ENCODE measurements at regions of chr14 and their contacts with region 1.

Region 1: DNA sequence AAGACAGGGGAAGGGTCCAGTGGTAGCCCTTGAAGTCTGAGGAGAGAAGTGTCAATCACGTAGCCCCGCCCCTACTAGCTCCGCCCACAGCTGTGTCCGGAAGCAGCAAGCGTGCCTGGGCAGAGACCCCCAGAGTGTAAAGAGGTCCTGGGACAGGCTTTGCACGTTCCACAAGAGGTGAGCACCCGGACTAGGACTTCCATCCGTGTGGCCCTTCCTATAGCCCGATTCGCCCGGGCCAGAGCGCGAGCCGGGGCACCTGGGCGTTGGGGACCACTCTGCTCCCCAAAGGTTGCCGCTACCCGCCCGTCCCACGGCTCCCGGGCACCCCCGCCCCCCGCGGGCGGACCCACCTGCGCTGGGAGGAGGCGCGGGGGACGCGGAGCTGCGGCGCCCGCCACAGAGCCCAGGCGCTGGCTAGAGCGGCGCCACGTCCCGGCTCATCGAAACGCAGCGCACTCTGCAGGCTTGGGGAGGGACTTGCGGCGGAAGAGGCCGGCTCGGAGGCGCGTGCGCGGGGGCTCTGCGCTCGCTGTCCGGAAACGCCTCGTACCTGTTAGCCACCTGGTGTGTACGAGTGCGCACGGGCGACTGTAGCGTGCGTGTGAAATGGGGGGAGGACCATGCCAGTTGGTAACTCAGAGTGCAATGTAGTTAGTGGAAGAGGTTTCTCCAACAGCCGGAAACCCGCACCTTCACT is at the start of gene RABGGTA:
- DNase-seq: peak; percentile 88
- ATAC-seq: peak; percentile 83
- H3K4me3 Mint-ChIP-seq: peak within 1 kb of the TSS; percentile 90
- H3K27ac Mint-ChIP-seq: peak within 1 kb of the TSS; percentile 96
- H3K4me1 Mint-ChIP-seq: peaks cover 57% of the 10 kb centered on the region
- H3K27me3 Mint-ChIP-seq: no peaks in the 10 kb centered on the region
- CTCF ChIP-seq: no peak
- total RNA-seq, gene RABGGTA: 53.6 and 70.5 TPM in 2 replicates

Region 2: DNA sequence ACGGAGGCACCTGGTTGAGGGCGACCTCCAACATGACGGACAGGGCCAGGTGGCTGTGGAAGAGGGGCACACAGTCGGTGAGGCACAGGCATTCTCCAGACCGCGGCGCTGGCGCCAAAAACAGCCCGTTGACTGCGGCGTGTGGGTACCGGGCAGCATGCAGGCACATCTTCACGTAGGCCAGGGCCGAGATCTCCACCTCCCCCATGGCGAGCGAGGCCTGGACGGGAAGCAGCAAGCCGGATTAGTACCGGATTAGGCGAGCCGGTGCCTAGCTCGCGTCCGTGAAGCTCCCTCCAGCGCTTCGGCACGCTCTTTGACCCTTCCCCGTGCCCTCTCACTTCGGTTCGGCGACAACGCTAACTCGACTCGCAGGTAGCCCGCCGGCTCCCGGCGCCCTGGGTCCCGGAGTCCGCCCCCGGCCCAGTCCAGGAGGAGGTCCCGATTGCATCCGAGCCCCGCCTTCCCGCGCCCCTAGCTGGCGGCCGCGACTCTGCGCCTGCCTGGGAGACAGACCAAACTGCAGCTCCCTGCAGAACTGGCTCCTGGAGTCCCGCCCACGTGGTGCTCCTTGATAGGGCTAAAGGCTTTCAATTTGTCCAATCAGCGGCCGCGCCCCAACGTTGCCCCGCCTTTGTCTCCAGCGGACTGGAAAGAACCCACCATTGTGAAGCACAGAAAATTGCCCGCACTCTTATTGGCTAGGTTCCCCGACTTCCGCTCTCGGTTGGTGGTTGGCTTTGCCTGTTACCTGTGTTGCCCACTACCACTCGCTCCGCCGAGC is 130.0 kb before region 1 on chr14 and contains the start of gene EMC9:
- CTCF ChIA-PET with region 1: no interaction called
- POLR2A ChIA-PET with region 1: interaction called, 12 read pairs
- intact Hi-C with region 1: no loop called
- DNase-seq: peak; percentile 92
- ATAC-seq: peak; percentile 90
- H3K4me3 Mint-ChIP-seq: peak within 1 kb of the TSS; percentile 83
- H3K27ac Mint-ChIP-seq: peak within 1 kb of the TSS; percentile 87
- H3K4me1 Mint-ChIP-seq: peaks cover 78% of the 10 kb centered on the region
- H3K27me3 Mint-ChIP-seq: no peaks in the 10 kb centered on the region
- CTCF ChIP-seq: no peak
- total RNA-seq, gene EMC9: 22.5 and 22.6 TPM in 2 replicates

Region 3: GRCh38 chr14:24232121-24232644 is 39.1 kb before region 1 on chr14 and contains the start of gene NEDD8:
- CTCF ChIA-PET with region 1: no interaction called
- POLR2A ChIA-PET with region 1: interaction called, 6 read pairs
- intact Hi-C with region 1: loop called (anchors 5 kb)
- DNase-seq: no peak
- ATAC-seq: peak; percentile 88
- H3K4me3 Mint-ChIP-seq: peak within 1 kb of the TSS; percentile 99
- H3K27ac Mint-ChIP-seq: peak within 1 kb of the TSS; percentile 94
- H3K4me1 Mint-ChIP-seq: peaks cover 43% of the 10 kb centered on the region
- H3K27me3 Mint-ChIP-seq: no peaks in the 10 kb centered on the region
- CTCF ChIP-seq: no peak
- total RNA-seq, gene NEDD8: 129 and 149 TPM in 2 replicates

Region 4: GRCh38 chr14:24332268-24332993 is 61.1 kb after region 1 on chr14:
- CTCF ChIA-PET with region 1: interaction called, 3 read pairs
- POLR2A ChIA-PET with region 1: interaction called, 3 read pairs
- intact Hi-C with region 1: loop called (anchors 1 kb)
- DNase-seq: peak; percentile 63
- ATAC-seq: peak; percentile 95
- H3K4me3 Mint-ChIP-seq: peak overlapping the region; percentile 83
- H3K27ac Mint-ChIP-seq: peak overlapping the region; percentile 42
- H3K4me1 Mint-ChIP-seq: peaks cover 39% of the 10 kb centered on the region
- H3K27me3 Mint-ChIP-seq: peaks cover 14% of the 10 kb centered on the region
- CTCF ChIP-seq: no peak

Region 5: GRCh38 chr14:24377657-24378056 is 106.4 kb after region 1 on chr14:
- CTCF ChIA-PET with region 1: no interaction called
- POLR2A ChIA-PET with region 1: no interaction called
- intact Hi-C with region 1: no loop called
- DNase-seq: no peak
- ATAC-seq: no peak
- H3K4me3 Mint-ChIP-seq: no peak overlapping the region
- H3K27ac Mint-ChIP-seq: no peak overlapping the region
- H3K4me1 Mint-ChIP-seq: no peaks in the 10 kb centered on the region
- H3K27me3 Mint-ChIP-seq: no peaks in the 10 kb centered on the region
- CTCF ChIP-seq: no peak

Measured in activated B cell treated with CpG ODN at 0.5 μM for 24 hours (primary cell).